ENCODE measurements at regions of chr2 and their contacts with region 1.

Region 1: GRCh38 chr2:138090330-138090729 is 126.1 kb downstream of the HNMT start:
- DNase-seq: no peak
- H3K4me3 ChIP-seq: no peak overlapping the region
- H3K27me3 ChIP-seq: peaks cover 3% of the 10 kb centered on the region
- CTCF ChIP-seq: peak; percentile 76

Region 2: GRCh38 chr2:137947728-137948336 is 142.5 kb before region 1 on chr2:
- CTCF ChIA-PET with region 1: interaction called, 49 read pairs
- POLR2A ChIA-PET with region 1: no interaction called
- DNase-seq: no peak
- H3K4me3 ChIP-seq: no peak overlapping the region
- H3K27me3 ChIP-seq: peaks cover 3% of the 10 kb centered on the region; the same call in 1 of the 2 replicates
- CTCF ChIP-seq: peak; percentile 63

Region 3: GRCh38 chr2:137964066-137964858 is 126.1 kb before region 1 on chr2 and contains the start of gene HNMT:
- CTCF ChIA-PET with region 1: interaction called, 11 read pairs
- POLR2A ChIA-PET with region 1: no interaction called
- DNase-seq: peak; percentile 62
- H3K4me3 ChIP-seq: peak within 1 kb of the TSS; percentile 41
- H3K27me3 ChIP-seq: no peaks in the 10 kb centered on the region
- CTCF ChIP-seq: no peak
- polyA plus RNA-seq, gene HNMT: 7.7 and 14.6 TPM in 2 replicates

Measured in BJ (cell line).